ENCODE measurements at regions of chr1 and their contacts with region 1.

Region 1: DNA sequence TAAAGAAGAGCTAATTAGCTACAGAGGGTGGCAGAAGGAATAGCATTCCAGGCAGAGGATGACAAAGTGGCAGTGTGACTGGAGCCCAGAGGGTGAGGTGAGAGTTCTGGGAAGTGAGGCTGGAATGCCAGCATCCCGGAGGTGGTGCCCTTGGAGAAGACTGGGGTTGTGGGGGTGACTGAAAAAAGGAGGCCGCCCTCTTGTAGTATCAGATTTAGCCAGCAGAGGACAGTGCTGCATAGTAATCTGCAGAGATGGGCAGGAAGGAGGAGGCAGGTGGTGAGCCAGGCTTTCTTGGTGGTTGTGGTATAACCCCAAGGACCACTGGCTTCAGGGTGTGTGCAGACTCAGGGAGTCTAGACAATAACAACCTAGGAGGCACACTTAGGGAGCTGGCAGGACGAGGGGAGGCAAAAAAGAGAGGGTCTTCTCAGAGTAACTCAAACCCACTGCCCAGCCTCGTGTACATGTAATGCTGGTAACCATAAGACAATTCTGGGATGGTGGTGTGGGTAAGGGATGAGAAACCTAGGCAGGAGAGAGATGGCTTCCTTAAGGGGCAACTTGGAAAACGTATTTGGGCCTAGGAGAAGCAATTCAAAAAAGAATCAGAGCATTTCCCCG is 30.5 kb downstream of the MROH7 start:
- DNase-seq: peak; percentile 50
- ATAC-seq: peak; percentile 99
- H3K4me3 ChIP-seq: no peak overlapping the region
- H3K27ac ChIP-seq: no peak overlapping the region
- H3K4me1 ChIP-seq: no peaks in the 10 kb centered on the region
- H3K27me3 ChIP-seq: peaks cover 31% of the 10 kb centered on the region
- CTCF ChIP-seq: peak; percentile 93
- POLR2A ChIP-seq: 0 out of 2 replicates have a peak, but pooled peaks have one; percentile 37
- RAD21 ChIP-seq: peak; percentile 93

Region 2: DNA sequence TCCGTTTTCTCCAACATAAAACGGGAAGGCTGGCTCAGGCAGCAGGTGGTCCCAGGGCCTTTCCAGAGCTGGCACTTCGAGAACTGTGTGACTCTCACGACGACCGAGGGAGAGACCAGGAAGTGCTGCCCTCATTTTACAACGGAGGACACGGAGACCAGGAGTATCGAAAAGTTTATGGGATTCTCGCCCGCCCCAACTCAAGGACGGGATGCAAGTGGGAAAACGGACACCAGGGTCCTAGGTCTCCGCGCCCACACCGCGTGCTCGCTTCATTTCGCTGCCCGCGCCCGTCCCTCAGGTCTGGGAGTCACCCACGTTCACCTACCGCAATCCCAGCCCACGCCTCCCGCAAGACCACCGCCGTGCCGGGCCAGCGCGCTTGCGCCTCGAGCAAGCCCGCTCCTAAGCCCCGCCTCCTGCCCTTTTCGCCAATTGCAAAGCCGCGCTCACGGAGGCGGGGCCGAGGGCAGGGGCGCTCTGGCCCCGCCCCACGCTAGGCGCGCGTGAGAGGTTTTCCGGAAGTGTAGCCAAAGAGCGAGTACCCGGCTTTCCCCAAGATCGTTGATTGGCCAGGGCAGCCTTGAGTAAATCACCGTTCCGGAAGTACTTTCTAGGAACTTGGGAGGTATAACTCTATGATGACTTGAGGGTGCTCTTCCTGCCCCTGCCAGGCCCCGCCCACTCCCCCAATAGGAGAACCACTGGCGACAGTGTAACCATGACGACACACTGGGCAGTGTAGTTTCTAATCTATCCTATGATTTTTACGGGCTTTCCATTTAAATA is 92.2 kb after region 1 on chr1 and contains the start of gene PARS2:
- CTCF ChIA-PET with region 1: no interaction called
- POLR2A ChIA-PET with region 1: no interaction called
- dilution Hi-C with region 1: no loop called
- in situ Hi-C with region 1: no loop called
- intact Hi-C with region 1: no loop called
- DNase-seq: peak; percentile 100
- ATAC-seq: peak; percentile 99
- H3K4me3 ChIP-seq: peak within 1 kb of the TSS; percentile 74
- H3K27ac ChIP-seq: peak within 1 kb of the TSS; percentile 69
- H3K4me1 ChIP-seq: no peaks in the 10 kb centered on the region
- H3K27me3 ChIP-seq: peaks cover 3% of the 10 kb centered on the region; the same call in 1 of the 2 replicates
- CTCF ChIP-seq: no peak
- POLR2A ChIP-seq: peak; percentile 89
- RAD21 ChIP-seq: no peak
- total RNA-seq, gene PARS2: 6.1 and 6.3 TPM in 2 replicates

Region 3: GRCh38 chr1:54791880-54792522 is 119.9 kb after region 1 on chr1:
- CTCF ChIA-PET with region 1: interaction called, 4 read pairs
- POLR2A ChIA-PET with region 1: no interaction called
- dilution Hi-C with region 1: no loop called
- in situ Hi-C with region 1: no loop called
- intact Hi-C with region 1: loop called (anchors 2 kb)
- DNase-seq: peak; percentile 34
- ATAC-seq: peak; percentile 56
- H3K4me3 ChIP-seq: no peak overlapping the region
- H3K27ac ChIP-seq: no peak overlapping the region
- H3K4me1 ChIP-seq: no peaks in the 10 kb centered on the region
- H3K27me3 ChIP-seq: peaks cover 48% of the 10 kb centered on the region
- CTCF ChIP-seq: peak; percentile 50
- POLR2A ChIP-seq: no peak
- RAD21 ChIP-seq: peak; percentile 57

Measured in IMR-90 (cell line).